Calu3 (cell line): ENCODE measurements at regions of chr12 and their contacts with region 1.

Region 1: DNA sequence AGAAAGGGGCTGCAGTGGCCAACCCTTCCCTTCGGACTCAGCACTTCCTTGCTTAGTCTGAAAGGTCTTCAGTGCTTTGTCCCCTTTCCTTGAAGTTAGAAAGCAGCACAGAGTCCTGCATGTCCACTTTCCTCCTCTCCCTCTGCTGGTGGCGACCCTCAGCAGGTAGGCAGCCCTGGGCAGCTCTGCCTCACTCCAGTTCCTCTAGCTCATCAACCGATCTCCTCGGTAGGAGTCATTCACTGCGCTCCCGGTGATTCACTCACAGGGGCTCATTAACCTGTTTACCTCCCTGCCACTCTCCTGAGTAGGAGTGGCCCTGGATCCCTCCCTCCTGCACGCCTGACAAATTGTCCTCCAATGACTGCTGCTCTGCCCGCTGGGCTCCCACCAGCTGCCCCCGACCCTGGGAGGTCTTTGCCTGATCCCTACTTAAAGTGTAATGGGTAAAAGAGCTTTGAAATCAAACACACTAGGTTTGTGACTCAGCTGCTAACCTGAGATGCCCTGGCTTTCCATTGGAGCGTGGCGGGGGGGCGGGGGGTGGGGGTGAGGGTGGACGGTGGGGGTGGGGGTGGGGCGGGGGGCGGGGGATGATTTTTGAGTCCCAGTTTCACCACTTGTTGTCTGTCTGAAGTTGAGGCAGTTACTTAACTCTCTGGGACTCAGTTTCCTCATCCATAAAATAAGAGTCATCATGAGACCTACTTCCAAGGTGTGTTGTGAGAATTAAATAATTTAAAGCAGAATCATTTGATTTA is 4.2 kb downstream of the SCNN1A start:
- DNase-seq: peak; percentile 87
- H3K4me3 Mint-ChIP-seq: peak overlapping the region; percentile 55
- H3K27ac Mint-ChIP-seq: peak overlapping the region; percentile 89
- H3K4me1 Mint-ChIP-seq: peaks cover 68% of the 10 kb centered on the region
- H3K27me3 Mint-ChIP-seq: no peaks in the 10 kb centered on the region
- CTCF ChIP-seq: no peak

Region 2: GRCh38 chr12:5756338-5756842 is 614.8 kb before region 1 on chr12:
- CTCF ChIA-PET with region 1: no interaction called
- intact Hi-C with region 1: no loop called
- DNase-seq: no peak
- H3K4me3 Mint-ChIP-seq: no peak overlapping the region
- H3K27ac Mint-ChIP-seq: no peak overlapping the region
- H3K4me1 Mint-ChIP-seq: no peaks in the 10 kb centered on the region
- H3K27me3 Mint-ChIP-seq: peaks cover 13% of the 10 kb centered on the region
- CTCF ChIP-seq: no peak

Region 3: GRCh38 chr12:6341417-6342139 is 29.6 kb before region 1 on chr12 and contains the start of gene TNFRSF1A:
- CTCF ChIA-PET with region 1: interaction called, 18 read pairs
- intact Hi-C with region 1: loop called (anchors 1 kb)
- DNase-seq: peak; percentile 65
- H3K4me3 Mint-ChIP-seq: no peak within 1 kb of the TSS
- H3K27ac Mint-ChIP-seq: no peak within 1 kb of the TSS
- H3K4me1 Mint-ChIP-seq: peaks cover 45% of the 10 kb centered on the region
- H3K27me3 Mint-ChIP-seq: no peaks in the 10 kb centered on the region
- CTCF ChIP-seq: no peak
- total RNA-seq, gene TNFRSF1A: 76.7 and 79.3 TPM in 2 replicates

Region 4: GRCh38 chr12:6392504-6393077 is 21.4 kb after region 1 on chr12:
- CTCF ChIA-PET with region 1: no interaction called
- intact Hi-C with region 1: no loop called
- DNase-seq: no peak
- H3K4me3 Mint-ChIP-seq: no peak overlapping the region
- H3K27ac Mint-ChIP-seq: no peak overlapping the region
- H3K4me1 Mint-ChIP-seq: peaks cover 27% of the 10 kb centered on the region
- H3K27me3 Mint-ChIP-seq: no peaks in the 10 kb centered on the region
- CTCF ChIP-seq: no peak

Region 5: GRCh38 chr12:6752921-6753771 is 382.0 kb after region 1 on chr12 and contains the start of gene MLF2:
- CTCF ChIA-PET with region 1: no interaction called
- intact Hi-C with region 1: no loop called
- DNase-seq: peak; percentile 98
- H3K4me3 Mint-ChIP-seq: peak within 1 kb of the TSS; percentile 98
- H3K27ac Mint-ChIP-seq: peak within 1 kb of the TSS; percentile 88
- H3K4me1 Mint-ChIP-seq: peaks cover 7% of the 10 kb centered on the region
- H3K27me3 Mint-ChIP-seq: peaks cover 22% of the 10 kb centered on the region
- CTCF ChIP-seq: peak; percentile 90
- total RNA-seq, gene MLF2: 176 and 183 TPM in 2 replicates